Sciatic nerve (tissue), 2 donors: ENCODE measurements at regions of chr3 and their contacts with region 1.

Region 1: GRCh38 chr3:65732051-65732935 is 306.4 kb downstream of the MAGI1 start:
- DNase-seq: no peak
- ATAC-seq: peak; percentile 74

Region 2: DNA sequence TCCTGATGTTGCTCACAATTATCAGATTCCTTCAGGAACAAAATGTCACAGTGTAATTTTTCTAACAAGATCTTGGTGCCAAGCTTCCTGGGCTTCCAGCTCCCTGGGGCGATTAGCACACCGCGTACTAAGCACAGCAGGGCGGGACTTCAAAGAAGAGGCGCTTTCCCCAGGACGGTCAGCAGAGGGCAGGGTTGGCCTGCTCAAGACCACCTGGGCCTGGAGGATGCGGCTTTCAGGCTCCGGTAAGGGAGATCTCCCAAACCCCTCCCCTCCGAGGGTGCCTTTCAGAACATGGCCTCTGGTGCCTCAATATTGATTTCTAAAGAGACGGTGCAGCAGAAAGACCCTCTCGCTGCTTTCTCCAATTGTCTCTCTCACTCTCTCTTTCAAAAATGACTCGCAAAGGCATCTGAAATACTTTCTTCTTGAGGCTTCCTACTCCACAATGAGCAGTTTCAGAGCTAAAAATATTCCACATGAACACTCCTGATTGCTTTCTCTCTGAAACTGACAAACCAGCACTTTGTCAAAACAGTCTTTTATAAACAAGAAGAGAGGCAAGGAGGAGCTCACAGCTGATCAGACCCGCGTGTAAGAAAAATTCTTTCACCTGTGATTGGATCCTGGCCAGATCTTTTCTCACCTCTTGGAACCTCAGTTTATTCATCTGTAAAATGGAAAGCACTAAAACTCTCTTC is 1198.5 kb before region 1 on chr3:
- intact Hi-C with region 1: loop called (anchors 10 kb)
- DNase-seq: peak; percentile 91
- ATAC-seq: peak; percentile 97

Region 3: DNA sequence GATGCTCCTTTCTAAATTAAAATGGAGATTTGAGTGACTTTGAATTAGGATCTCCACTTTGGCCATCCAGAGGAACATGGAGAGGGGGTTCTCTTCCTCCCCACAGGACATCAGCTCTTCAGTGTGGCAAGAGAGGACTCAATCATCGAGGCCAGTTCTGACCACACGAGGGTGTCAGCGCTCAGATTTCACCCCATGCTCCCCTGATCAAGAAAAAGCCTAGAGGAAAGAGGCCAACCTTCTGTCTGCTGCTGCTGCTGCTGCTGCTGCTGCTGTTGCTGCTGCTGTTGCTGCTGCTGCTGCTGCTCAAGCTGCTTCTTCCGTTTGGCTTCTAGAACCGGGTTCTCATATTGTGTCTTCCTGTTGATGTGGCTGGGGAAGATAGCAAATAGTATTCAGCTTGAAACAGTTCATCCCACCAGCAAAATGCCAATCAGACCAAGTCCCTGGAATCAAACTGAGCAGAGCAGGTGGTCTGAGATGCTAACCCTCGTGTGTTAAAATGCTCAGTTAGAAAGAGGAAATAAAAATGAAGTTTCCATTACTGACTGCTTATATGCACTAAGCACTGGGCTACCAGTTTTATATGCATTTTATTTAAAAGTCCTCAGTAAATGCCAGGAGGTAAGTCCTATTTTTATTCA is 292.5 kb before region 1 on chr3:
- intact Hi-C with region 1: loop called (anchors 10 kb)
- DNase-seq: peak; percentile 69
- ATAC-seq: peak; percentile 85

Region 4: GRCh38 chr3:65604863-65605526 is 127.3 kb before region 1 on chr3:
- intact Hi-C with region 1: no loop called
- DNase-seq: no peak
- ATAC-seq: peak; percentile 38

Region 5: DNA sequence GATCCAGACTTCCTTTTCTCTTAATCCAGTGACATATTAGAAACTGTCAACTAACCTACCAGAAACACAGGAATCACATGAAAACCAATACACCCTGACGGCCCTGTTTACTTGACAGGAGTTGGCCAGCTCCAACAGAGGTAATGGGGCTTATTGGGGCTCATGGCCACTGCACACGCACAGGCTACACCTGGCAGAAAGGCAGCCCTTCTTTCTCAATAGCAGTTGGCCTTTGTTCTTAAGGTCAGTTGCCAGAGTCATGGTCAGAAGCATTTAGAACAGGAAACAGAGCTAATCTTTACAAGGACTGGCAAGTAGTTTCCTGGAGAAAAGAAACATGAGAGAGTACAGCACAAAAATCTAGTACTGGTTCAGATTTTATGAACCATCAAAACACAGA is 124.6 kb after region 1 on chr3:
- intact Hi-C with region 1: no loop called
- DNase-seq: no peak
- ATAC-seq: no peak